Pancreas (tissue), 10 donors: ENCODE measurements at regions of chr12 and their contacts with region 1.

Region 1: DNA sequence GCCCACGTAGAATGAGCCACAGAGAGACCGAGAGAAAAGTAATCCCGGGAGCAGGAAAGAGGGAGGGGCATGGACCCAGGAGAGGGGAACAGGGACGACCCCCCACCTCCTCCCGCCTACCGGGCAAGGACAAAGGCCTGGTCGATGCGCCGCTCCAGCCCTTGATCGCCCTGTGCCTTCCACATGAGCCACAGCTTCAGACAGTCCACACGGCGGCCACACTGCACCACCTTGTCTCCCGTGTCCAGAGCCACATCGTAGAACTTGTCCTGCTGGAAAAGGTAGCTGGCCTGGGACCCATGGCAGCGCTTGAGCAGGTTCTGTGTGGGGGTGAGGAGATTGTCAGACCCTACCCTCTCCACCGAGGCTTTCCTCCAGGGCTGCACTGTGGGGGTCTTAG is 20.5 kb upstream of the ZNF740 start:
- DNase-seq: peak in 1 of 6 donors; percentile 21
- ATAC-seq: peak in 1 of 4 donors; percentile 12
- H3K4me3 ChIP-seq: no peak overlapping the region
- H3K27ac ChIP-seq: no peak overlapping the region
- H3K4me1 ChIP-seq: no peaks in the 10 kb centered on the region
- H3K27me3 ChIP-seq: no peaks in the 10 kb centered on the region
- CTCF ChIP-seq: no peak

Region 2: DNA sequence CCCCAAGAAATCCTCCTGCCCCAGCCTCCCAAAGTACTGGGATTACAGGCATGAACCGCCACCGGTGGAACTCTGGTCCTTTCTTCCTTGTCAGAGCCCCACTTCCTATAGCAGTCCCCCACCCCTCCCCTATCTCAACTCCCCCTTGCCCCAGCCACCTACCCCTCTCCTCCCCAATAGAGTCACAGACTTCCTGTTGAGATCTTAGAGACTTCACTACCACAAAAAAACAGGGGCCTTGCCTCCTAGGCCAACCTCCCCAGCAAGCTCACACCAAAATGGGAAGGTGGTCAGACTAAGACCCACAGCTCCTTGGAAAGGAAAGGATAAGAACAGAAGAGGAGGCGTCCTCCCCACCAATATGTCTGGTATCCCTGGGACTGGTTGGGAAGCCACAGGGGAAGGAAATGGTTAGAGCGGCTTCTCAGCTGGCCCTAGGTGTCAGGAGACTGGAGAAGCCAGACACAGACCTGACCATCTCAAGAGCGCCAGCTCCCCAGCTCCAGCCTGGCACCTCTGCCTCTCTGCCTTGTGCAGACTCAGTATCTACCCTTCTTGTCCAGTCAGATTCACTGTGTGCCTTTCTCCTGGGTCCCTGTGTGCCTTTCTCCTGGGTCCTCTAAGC is 38.6 kb after region 1 on chr12:
- intact Hi-C with region 1: loop called in 1 of 3 experiments (anchors 5 kb)
- DNase-seq: no peak
- ATAC-seq: no peak
- H3K4me3 ChIP-seq: no peak overlapping the region
- H3K27ac ChIP-seq: no peak overlapping the region
- H3K4me1 ChIP-seq: peaks cover 0 to 6% (median 0%) of the 10 kb centered on the region in 3 donors
- H3K27me3 ChIP-seq: no peaks in the 10 kb centered on the region
- CTCF ChIP-seq: no peak

Region 3: DNA sequence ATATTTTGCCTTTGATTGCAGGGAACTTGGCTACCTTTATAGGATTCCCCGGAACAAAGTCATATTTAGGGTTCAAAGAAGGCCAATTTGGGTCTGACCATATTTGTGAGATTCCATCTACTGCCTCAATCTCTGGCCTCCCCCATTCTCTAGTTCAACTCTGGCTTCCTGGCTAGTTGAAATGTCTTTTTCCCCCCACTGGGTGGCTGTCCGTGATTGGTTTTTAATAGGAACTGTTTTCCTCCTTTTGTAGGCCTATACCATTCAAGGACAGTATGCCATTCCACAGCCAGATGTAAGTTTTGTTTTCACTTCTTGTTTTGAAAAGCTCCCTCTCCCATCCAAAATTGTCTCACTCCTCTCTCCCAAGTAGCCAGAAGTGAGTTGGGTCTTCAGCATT is 305.7 kb after region 1 on chr12:
- intact Hi-C with region 1: no loop called
- DNase-seq: no peak
- ATAC-seq: no peak
- H3K4me3 ChIP-seq: no peak overlapping the region
- H3K27ac ChIP-seq: no peak overlapping the region
- H3K4me1 ChIP-seq: no peaks in the 10 kb centered on the region
- H3K27me3 ChIP-seq: no peaks in the 10 kb centered on the region
- CTCF ChIP-seq: no peak